B cell (primary cell): ENCODE measurements at regions of chr19 and their contacts with region 1.

Region 1: DNA sequence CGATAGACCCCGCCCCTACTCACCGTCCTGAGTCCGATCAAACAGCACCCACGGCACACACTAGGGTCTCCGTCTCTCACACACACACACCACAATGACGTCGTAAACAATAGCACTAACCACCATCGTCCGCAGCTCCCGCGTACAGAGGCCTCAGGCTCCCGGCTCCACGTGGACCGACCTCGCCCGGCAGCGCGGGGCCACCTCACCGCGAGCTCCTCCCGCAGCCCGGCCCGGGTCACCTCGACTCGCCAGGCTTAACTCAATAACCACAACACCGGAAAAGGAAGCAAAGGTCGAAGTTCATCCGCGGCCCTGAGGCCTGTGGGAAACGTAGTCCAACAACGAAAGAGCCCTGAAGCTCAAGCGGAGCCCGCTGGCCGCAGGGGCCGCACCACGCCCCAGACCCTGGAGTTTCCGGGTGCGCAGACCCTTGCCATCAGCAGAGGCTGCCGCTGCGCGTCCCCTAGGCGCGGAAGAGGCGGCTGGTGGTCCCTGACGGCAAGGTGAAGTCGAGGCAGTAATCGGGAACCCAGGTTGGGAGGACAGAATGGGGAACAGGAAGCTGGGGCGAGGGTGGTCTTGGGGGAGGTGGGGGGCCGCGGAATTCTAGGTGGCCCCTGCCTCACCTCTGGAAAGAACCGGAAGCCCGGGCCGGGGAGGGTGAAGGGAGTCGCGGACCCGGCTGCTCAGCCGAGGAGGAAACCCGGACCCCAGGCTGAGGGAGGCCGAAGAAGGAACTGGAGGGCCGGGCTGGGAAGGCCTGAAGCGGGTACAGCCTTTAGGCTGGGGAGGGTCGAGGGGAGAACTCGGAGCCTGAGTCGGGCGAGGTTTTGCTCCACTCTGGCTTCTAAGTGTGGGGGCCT is at the start of gene ZNF529:
- DNase-seq: peak; percentile 93
- ATAC-seq: peak; percentile 94
- H3K4me3 ChIP-seq: peak within 1 kb of the TSS; percentile 57 to 91 (median 88)
- H3K4me3 Mint-ChIP-seq: peak within 1 kb of the TSS; percentile 92
- H3K27ac ChIP-seq: peak within 1 kb of the TSS; percentile 82 to 98
- H3K27ac Mint-ChIP-seq: peak within 1 kb of the TSS; percentile 91
- H3K4me1 ChIP-seq: peaks cover 18% of the 10 kb centered on the region in 2 donors
- H3K4me1 Mint-ChIP-seq: peaks cover 34% of the 10 kb centered on the region
- H3K27me3 ChIP-seq: no peaks in the 10 kb centered on the region
- H3K27me3 Mint-ChIP-seq: no peaks in the 10 kb centered on the region
- CTCF ChIP-seq: no peak
- total RNA-seq, gene ZNF529: 33.2 and 35.4 TPM in 2 replicates

Region 2: GRCh38 chr19:35757749-35758608 is 815.3 kb before region 1 on chr19 and contains the start of gene PROSER3:
- CTCF ChIA-PET with region 1: no interaction called
- POLR2A ChIA-PET with region 1: no interaction called
- intact Hi-C with region 1: no loop called
- DNase-seq: peak; percentile 99
- ATAC-seq: peak; percentile 95
- H3K4me3 ChIP-seq: peak within 1 kb of the TSS; percentile 85 to 99 (median 94)
- H3K4me3 Mint-ChIP-seq: peak within 1 kb of the TSS; percentile 99
- H3K27ac ChIP-seq: peak within 1 kb of the TSS; percentile 91 to 96
- H3K27ac Mint-ChIP-seq: peak within 1 kb of the TSS; percentile 99
- H3K4me1 ChIP-seq: peaks cover 24 to 35% of the 10 kb centered on the region in 2 donors
- H3K4me1 Mint-ChIP-seq: peaks cover 34% of the 10 kb centered on the region
- H3K27me3 ChIP-seq: peaks cover 0 to 26% (median 10%) of the 10 kb centered on the region in 4 experiments
- H3K27me3 Mint-ChIP-seq: peaks cover 17% of the 10 kb centered on the region
- CTCF ChIP-seq: no peak
- total RNA-seq, gene PROSER3: 61.0 and 65.6 TPM in 2 replicates

Region 3: DNA sequence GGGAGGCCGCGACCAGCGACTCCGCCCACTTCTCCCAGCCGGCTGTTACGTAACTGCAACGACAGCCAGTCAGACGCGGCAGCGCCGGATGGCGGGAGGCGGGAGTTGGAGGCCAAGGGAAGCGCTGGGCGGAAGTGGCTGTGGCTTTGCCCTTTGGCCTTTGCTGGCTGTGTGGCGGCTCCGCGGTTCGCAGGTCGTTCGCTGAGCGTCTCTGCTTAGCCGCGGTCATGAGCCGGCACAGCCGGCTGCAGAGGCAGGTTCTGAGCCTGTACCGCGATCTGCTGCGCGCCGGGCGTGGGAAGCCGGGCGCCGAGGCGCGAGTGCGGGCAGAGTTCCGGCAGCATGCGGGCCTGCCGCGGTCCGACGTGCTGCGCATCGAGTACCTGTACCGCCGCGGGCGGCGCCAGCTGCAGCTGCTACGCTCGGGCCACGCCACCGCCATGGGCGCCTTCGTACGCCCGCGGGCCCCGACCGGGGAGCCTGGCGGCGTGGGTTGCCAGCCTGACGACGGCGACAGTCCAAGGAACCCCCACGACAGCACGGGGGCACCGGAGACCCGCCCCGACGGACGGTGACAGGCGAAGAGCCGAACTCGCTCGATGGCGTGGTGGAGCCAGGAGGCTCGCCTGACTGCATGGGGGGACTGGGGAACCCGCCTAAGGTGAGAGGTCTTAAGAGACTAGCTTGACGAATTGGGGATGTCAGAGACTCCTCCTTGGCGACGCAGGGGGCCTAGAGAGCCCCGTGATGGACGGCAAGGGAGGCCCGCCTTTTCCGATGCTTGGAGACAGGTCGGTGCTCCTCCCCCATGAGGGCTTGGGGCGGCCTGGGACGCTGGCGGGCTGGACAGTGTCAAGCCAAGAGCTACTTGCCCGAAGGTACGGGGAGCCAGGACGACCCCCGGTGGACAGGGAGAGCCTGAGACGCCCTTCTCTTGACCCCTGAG is 577.9 kb before region 1 on chr19 and contains the start of gene SDHAF1:
- CTCF ChIA-PET with region 1: no interaction called
- POLR2A ChIA-PET with region 1: no interaction called
- intact Hi-C with region 1: loop called (anchors 10 kb)
- DNase-seq: peak; percentile 93
- ATAC-seq: peak; percentile 96
- H3K4me3 ChIP-seq: peak within 1 kb of the TSS; percentile 60 to 79 (median 77)
- H3K4me3 Mint-ChIP-seq: peak within 1 kb of the TSS; percentile 97
- H3K27ac ChIP-seq: peak within 1 kb of the TSS; percentile 55 to 81
- H3K27ac Mint-ChIP-seq: peak within 1 kb of the TSS; percentile 96
- H3K4me1 ChIP-seq: peaks cover 18 to 25% of the 10 kb centered on the region in 2 donors
- H3K4me1 Mint-ChIP-seq: peaks cover 32% of the 10 kb centered on the region
- H3K27me3 ChIP-seq: no peaks in the 10 kb centered on the region
- H3K27me3 Mint-ChIP-seq: no peaks in the 10 kb centered on the region
- CTCF ChIP-seq: no peak
- total RNA-seq, gene SDHAF1: 24.2 and 24.6 TPM in 2 replicates

Region 4: DNA sequence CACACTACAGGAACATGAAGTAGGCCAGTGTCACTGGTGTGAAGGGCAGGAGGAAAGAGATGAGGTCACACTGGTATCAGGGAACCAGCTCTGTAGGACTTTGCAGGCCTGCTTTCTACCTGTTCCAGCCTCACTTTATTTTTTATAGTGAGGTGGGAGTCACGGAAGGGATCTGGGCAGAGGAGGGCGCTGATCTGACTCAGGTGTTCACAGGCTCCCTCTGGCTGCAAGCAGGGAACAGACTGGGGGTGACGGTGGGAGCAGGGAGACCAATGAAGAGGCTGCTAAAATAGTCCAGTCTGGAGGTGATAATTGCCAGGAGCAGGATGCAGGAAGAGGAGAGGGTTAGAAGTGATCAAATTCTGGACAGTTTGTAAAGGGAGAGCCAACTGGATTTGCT is 522.0 kb before region 1 on chr19:
- CTCF ChIA-PET with region 1: no interaction called
- POLR2A ChIA-PET with region 1: no interaction called
- intact Hi-C with region 1: no loop called
- DNase-seq: no peak
- ATAC-seq: no peak
- H3K4me3 ChIP-seq: no peak overlapping the region
- H3K4me3 Mint-ChIP-seq: peak overlapping the region; percentile 40
- H3K27ac ChIP-seq: no peak overlapping the region
- H3K27ac Mint-ChIP-seq: no peak overlapping the region
- H3K4me1 ChIP-seq: peaks cover 9 to 18% of the 10 kb centered on the region in 2 donors
- H3K4me1 Mint-ChIP-seq: peaks cover 18% of the 10 kb centered on the region
- H3K27me3 ChIP-seq: no peaks in the 10 kb centered on the region
- H3K27me3 Mint-ChIP-seq: no peaks in the 10 kb centered on the region
- CTCF ChIP-seq: no peak

Region 5: DNA sequence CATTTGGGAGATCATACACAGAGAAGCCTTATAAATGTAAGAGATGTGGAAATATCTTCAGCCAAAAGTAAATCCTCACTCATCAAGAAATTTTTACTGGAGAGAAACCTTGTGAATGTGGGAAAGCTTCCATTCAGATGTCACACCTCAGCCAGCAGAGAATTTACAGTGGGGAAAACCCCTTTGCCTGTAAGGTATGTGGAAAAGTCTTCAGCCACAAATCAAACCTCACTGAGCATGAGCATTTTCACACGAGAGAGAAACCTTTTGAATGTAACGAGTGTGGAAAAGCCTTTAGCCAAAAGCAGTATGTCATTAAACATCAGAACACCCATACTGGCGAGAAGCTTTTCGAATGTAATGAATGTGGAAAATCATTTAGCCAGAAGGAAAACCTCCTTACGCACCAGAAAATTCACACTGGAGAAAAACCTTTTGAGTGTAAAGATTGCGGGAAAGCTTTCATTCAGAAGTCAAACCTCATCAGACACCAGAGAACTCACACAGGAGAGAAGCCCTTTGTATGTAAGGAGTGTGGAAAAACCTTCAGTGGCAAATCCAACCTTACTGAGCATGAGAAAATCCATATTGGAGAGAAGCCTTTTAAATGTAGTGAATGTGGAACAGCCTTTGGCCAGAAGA is 336.8 kb before region 1 on chr19:
- CTCF ChIA-PET with region 1: no interaction called
- POLR2A ChIA-PET with region 1: no interaction called
- intact Hi-C with region 1: no loop called
- DNase-seq: no peak
- ATAC-seq: no peak
- H3K4me3 ChIP-seq: no peak overlapping the region
- H3K4me3 Mint-ChIP-seq: no peak overlapping the region
- H3K27ac ChIP-seq: no peak overlapping the region
- H3K27ac Mint-ChIP-seq: no peak overlapping the region
- H3K4me1 ChIP-seq: no peaks in the 10 kb centered on the region
- H3K4me1 Mint-ChIP-seq: no peaks in the 10 kb centered on the region
- H3K27me3 ChIP-seq: no peaks in the 10 kb centered on the region
- H3K27me3 Mint-ChIP-seq: no peaks in the 10 kb centered on the region
- CTCF ChIP-seq: no peak

Region 6: GRCh38 chr19:36418287-36419001 is 154.8 kb before region 1 on chr19 and contains the start of gene ZFP82:
- CTCF ChIA-PET with region 1: no interaction called
- POLR2A ChIA-PET with region 1: interaction called, 4 read pairs
- intact Hi-C with region 1: loop called (anchors 1 kb)
- DNase-seq: peak; percentile 91
- ATAC-seq: peak; percentile 96
- H3K4me3 ChIP-seq: peak within 1 kb of the TSS; percentile 27 to 98 (median 85)
- H3K4me3 Mint-ChIP-seq: peak within 1 kb of the TSS; percentile 97
- H3K27ac ChIP-seq: peak within 1 kb of the TSS; percentile 90 to 95
- H3K27ac Mint-ChIP-seq: peak within 1 kb of the TSS; percentile 96
- H3K4me1 ChIP-seq: peaks cover 17 to 23% of the 10 kb centered on the region in 2 donors
- H3K4me1 Mint-ChIP-seq: peaks cover 33% of the 10 kb centered on the region
- H3K27me3 ChIP-seq: peaks cover 0 to 21% (median 13%) of the 10 kb centered on the region in 4 experiments
- H3K27me3 Mint-ChIP-seq: peaks cover 17% of the 10 kb centered on the region
- CTCF ChIP-seq: no peak
- total RNA-seq, gene ZFP82: 14.4 and 14.6 TPM in 2 replicates

Region 7: GRCh38 chr19:36605101-36605876 is 32.0 kb after region 1 on chr19 and contains the start of gene ZNF382:
- CTCF ChIA-PET with region 1: interaction called, 4 read pairs
- POLR2A ChIA-PET with region 1: interaction called, 10 read pairs
- intact Hi-C with region 1: loop called (anchors 1 kb)
- DNase-seq: peak; percentile 91
- ATAC-seq: peak; percentile 77
- H3K4me3 ChIP-seq: peak within 1 kb of the TSS; percentile 24 to 96 (median 91)
- H3K4me3 Mint-ChIP-seq: peak within 1 kb of the TSS; percentile 97
- H3K27ac ChIP-seq: peak within 1 kb of the TSS; percentile 94 to 98
- H3K27ac Mint-ChIP-seq: peak within 1 kb of the TSS; percentile 96
- H3K4me1 ChIP-seq: peaks cover 12 to 16% of the 10 kb centered on the region in 2 donors
- H3K4me1 Mint-ChIP-seq: peaks cover 24% of the 10 kb centered on the region
- H3K27me3 ChIP-seq: no peaks in the 10 kb centered on the region
- H3K27me3 Mint-ChIP-seq: no peaks in the 10 kb centered on the region
- CTCF ChIP-seq: no peak
- total RNA-seq, gene ZNF382: 24.7 and 24.8 TPM in 2 replicates

Region 8: GRCh38 chr19:36627057-36627456 is 53.8 kb after region 1 on chr19:
- CTCF ChIA-PET with region 1: no interaction called
- POLR2A ChIA-PET with region 1: no interaction called
- intact Hi-C with region 1: no loop called
- DNase-seq: no peak
- ATAC-seq: no peak
- H3K4me3 ChIP-seq: no peak overlapping the region
- H3K4me3 Mint-ChIP-seq: no peak overlapping the region
- H3K27ac ChIP-seq: no peak overlapping the region
- H3K27ac Mint-ChIP-seq: no peak overlapping the region
- H3K4me1 ChIP-seq: no peaks in the 10 kb centered on the region
- H3K4me1 Mint-ChIP-seq: no peaks in the 10 kb centered on the region
- H3K27me3 ChIP-seq: no peaks in the 10 kb centered on the region
- H3K27me3 Mint-ChIP-seq: no peaks in the 10 kb centered on the region
- CTCF ChIP-seq: no peak

Region 9: GRCh38 chr19:36687214-36688056 is 114.2 kb after region 1 on chr19 and contains the start of gene ZNF567:
- CTCF ChIA-PET with region 1: no interaction called
- POLR2A ChIA-PET with region 1: no interaction called
- intact Hi-C with region 1: loop called (anchors 1 kb)
- DNase-seq: peak; percentile 96
- ATAC-seq: peak; percentile 94
- H3K4me3 ChIP-seq: peak within 1 kb of the TSS; percentile 48 to 90 (median 76)
- H3K4me3 Mint-ChIP-seq: peak within 1 kb of the TSS; percentile 100
- H3K27ac ChIP-seq: peak within 1 kb of the TSS; percentile 56 to 72
- H3K27ac Mint-ChIP-seq: peak within 1 kb of the TSS; percentile 96
- H3K4me1 ChIP-seq: peaks cover 14 to 19% of the 10 kb centered on the region in 2 donors
- H3K4me1 Mint-ChIP-seq: peaks cover 28% of the 10 kb centered on the region
- H3K27me3 ChIP-seq: no peaks in the 10 kb centered on the region
- H3K27me3 Mint-ChIP-seq: no peaks in the 10 kb centered on the region
- CTCF ChIP-seq: no peak
- total RNA-seq, gene ZNF567: 19.7 and 22.4 TPM in 2 replicates

Region 10: DNA sequence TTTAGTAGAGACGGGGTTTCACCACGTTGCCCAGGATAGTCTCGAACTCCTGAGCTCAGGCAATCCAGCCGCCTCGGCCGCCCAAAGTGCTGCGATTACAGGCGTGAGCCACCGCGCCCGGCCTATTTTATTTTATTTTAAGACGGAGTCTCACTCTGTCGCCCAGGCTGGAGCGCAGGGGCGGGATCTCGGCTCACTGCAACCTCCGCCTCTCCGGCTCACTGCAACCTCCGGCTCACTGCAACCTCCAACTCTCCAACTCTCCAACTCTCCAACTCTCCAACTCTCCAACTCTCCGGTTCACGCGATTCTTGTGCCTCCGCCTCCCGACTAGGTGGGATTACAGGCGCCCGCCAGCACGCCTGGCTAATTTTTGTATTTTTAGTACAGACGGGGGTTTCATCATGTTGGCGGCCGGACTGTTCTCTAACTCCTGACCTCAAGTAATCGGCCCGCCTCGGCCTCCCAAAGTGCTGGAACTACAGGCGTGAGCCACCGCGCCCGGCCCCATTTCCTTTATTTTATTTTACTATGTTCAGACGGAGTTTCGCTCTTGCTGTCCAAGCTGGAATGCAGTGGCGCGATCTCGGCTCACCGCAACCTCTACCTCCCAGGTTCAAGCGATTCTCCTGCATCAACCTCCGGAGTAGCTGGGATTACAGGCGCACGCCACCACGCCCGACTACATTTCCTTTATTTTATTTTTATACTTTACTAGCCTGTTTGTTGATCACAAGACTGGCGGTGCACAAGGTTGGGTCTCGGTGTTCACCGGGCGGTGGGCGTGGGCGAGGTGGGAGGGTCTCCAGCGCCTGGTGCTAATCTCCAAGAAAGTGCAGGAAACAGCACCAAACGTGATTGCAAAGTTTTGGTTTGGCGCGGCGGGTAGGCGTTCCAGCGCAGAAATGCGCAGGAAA is 223.1 kb after region 1 on chr19:
- CTCF ChIA-PET with region 1: interaction called, 3 read pairs
- POLR2A ChIA-PET with region 1: no interaction called
- intact Hi-C with region 1: loop called (anchors 2 kb)
- DNase-seq: no peak
- ATAC-seq: no peak
- H3K4me3 ChIP-seq: peak overlapping the region; percentile 63 to 91 (median 84)
- H3K4me3 Mint-ChIP-seq: peak overlapping the region; percentile 95
- H3K27ac ChIP-seq: peak overlapping the region; percentile 86 to 90
- H3K27ac Mint-ChIP-seq: peak overlapping the region; percentile 99
- H3K4me1 ChIP-seq: peaks cover 0 to 17% of the 10 kb centered on the region in 2 donors
- H3K4me1 Mint-ChIP-seq: peaks cover 25% of the 10 kb centered on the region
- H3K27me3 ChIP-seq: peaks cover 0 to 6% (median 0%) of the 10 kb centered on the region in 4 experiments
- H3K27me3 Mint-ChIP-seq: peaks cover 7% of the 10 kb centered on the region
- CTCF ChIP-seq: no peak

Region 11: DNA sequence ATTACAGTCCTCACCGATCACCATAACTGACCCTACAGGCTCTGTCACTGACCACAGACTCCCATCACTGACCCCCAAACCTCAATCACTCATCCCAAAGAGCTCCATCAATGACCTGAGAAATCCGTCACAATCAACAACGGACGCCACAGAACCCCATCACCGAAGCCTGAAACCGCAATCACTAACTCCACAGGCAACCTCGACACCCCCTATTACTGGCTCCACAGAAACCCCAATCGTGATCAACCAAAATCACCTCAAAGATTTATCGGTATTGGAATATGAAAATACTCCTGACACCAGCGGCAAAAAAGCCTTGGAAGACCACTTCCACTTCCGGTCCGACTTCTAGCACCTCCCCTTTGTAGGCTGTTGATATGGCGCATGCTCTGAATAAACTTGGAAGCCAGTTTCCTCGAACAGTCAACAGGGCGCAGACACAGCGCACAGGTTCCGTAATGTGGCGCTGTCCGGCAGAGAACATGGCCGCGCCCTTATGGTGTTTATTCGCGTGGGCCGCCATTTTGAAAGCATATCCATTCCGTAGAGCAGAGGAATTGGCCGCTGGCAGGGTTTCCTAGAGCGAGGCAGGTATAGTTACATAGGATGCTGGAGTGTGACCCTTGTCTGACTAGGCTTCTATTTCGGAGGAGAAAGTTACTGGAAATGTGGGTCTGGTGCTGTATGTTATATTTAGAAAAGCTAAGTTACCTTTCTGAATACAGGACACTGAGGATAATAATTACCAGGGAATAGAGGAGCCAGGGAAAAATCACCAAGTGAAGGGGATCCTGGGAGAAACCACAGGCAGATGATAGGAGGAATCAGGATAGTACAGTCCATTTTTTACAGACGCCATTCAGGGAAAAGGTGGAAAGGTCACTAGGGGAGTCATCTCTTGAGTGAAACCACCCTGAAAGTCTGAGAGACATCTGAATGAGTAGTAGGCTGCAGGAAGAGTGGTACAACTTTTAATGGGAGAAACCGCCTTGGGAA is 599.4 kb after region 1 on chr19 and contains the start of gene ZNF585A:
- CTCF ChIA-PET with region 1: no interaction called
- POLR2A ChIA-PET with region 1: no interaction called
- intact Hi-C with region 1: loop called (anchors 1 kb)
- DNase-seq: peak; percentile 96
- ATAC-seq: peak; percentile 100
- H3K4me3 ChIP-seq: peak within 1 kb of the TSS; percentile 72 to 96 (median 82)
- H3K4me3 Mint-ChIP-seq: no peak within 1 kb of the TSS
- H3K27ac ChIP-seq: peak within 1 kb of the TSS; percentile 70 to 89
- H3K27ac Mint-ChIP-seq: no peak within 1 kb of the TSS
- H3K4me1 ChIP-seq: peaks cover 5 to 7% of the 10 kb centered on the region in 2 donors
- H3K4me1 Mint-ChIP-seq: peaks cover 3% of the 10 kb centered on the region
- H3K27me3 ChIP-seq: no peaks in the 10 kb centered on the region
- H3K27me3 Mint-ChIP-seq: no peaks in the 10 kb centered on the region
- CTCF ChIP-seq: peak; percentile 23
- total RNA-seq, gene ZNF585A: 20.0 and 22.0 TPM in 2 replicates